ENCODE measurements at regions of chr15 and their contacts with region 1.

Region 1: DNA sequence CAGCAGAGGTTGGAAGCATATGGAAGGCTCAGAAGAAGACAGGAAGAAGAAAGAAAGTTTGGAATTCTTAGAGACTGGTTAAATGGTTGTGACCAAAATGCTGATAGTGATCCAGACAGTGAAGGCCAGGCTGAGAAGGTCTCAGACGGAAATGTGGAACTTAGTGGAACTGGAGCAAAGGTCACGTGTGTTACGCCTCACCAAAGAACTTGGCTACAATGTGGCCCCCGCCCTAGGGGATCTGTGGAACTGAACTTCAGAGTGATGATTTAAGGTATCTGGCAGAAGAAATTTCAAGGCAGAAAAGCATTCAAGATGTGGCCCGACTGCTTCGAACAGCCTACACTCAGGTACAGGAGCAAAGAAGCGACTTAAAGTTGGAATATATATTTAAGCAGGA is 83.1 kb downstream of the MYO5A start:
- DNase-seq: no peak
- H3K4me3 ChIP-seq: no peak overlapping the region
- H3K27ac ChIP-seq: no peak overlapping the region
- H3K4me1 ChIP-seq: peaks cover 7% of the 10 kb centered on the region
- H3K27me3 ChIP-seq: no peaks in the 10 kb centered on the region
- CTCF ChIP-seq: no peak

Region 2: GRCh38 chr15:52408823-52409222 is 36.7 kb before region 1 on chr15:
- CTCF ChIA-PET with region 1: no interaction called
- dilution Hi-C with region 1: loop called (anchors 5 kb)
- in situ Hi-C with region 1: no loop called
- intact Hi-C with region 1: no loop called
- DNase-seq: peak; percentile 56
- H3K4me3 ChIP-seq: no peak overlapping the region
- H3K27ac ChIP-seq: no peak overlapping the region
- H3K4me1 ChIP-seq: no peaks in the 10 kb centered on the region
- H3K27me3 ChIP-seq: no peaks in the 10 kb centered on the region
- CTCF ChIP-seq: no peak

Region 3: DNA sequence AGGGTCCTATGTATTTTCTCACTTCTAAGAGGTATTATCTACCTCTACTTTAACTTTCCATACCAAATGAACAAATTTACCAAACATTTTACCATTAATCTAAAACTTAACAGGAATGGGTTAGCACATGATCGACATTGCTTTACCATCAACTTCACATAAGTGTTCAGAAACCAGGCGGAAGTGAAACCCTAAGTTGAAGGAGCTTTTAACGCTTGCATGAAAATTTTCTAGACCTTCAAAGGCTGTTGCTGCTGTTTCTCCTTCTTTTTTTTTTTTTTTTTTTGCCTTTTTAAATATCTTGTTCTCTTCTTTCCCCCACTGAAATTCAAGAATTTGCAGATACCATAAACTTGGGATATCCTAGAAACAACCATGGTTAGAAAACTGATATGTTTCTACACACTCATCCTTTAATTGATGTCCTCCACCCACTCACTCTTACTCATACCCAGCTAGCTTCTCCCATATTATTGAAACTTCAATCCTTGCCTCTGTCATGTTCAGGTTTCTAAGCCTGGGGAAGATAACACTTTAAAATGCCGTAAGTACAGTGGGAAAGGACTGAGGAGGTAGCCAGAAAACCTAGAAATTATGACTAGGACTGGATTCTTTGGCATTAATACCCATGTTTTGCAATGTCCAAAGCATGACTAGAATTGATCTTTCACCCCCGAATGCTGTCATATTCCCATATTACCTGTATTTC is 58.4 kb after region 1 on chr15:
- CTCF ChIA-PET with region 1: no interaction called
- dilution Hi-C with region 1: loop called (anchors 5 kb)
- in situ Hi-C with region 1: no loop called
- intact Hi-C with region 1: loop called (anchors 5 kb)
- DNase-seq: peak; percentile 83
- H3K4me3 ChIP-seq: no peak overlapping the region
- H3K27ac ChIP-seq: peak overlapping the region; percentile 53
- H3K4me1 ChIP-seq: peaks cover 21% of the 10 kb centered on the region
- H3K27me3 ChIP-seq: no peaks in the 10 kb centered on the region
- CTCF ChIP-seq: no peak

Measured in mammary epithelial cell (primary cell).